Sigmoid colon (tissue), 7 donors: ENCODE measurements at regions of chr15 and their contacts with region 1.

Region 1: GRCh38 chr15:49468440-49468839 is 45.4 kb downstream of the FGF7 start:
- DNase-seq: no peak
- H3K4me3 ChIP-seq: no peak overlapping the region
- H3K27ac ChIP-seq: peak overlapping the region in 3 of 4 donors; percentile 60 to 72 (median 64)
- H3K4me1 ChIP-seq: peaks cover 0 to 61% (median 43%) of the 10 kb centered on the region in 4 donors
- H3K27me3 ChIP-seq: no peaks in the 10 kb centered on the region
- CTCF ChIP-seq: no peak
- EP300 ChIP-seq: no peak
- POLR2A ChIP-seq: no peak

Region 2: DNA sequence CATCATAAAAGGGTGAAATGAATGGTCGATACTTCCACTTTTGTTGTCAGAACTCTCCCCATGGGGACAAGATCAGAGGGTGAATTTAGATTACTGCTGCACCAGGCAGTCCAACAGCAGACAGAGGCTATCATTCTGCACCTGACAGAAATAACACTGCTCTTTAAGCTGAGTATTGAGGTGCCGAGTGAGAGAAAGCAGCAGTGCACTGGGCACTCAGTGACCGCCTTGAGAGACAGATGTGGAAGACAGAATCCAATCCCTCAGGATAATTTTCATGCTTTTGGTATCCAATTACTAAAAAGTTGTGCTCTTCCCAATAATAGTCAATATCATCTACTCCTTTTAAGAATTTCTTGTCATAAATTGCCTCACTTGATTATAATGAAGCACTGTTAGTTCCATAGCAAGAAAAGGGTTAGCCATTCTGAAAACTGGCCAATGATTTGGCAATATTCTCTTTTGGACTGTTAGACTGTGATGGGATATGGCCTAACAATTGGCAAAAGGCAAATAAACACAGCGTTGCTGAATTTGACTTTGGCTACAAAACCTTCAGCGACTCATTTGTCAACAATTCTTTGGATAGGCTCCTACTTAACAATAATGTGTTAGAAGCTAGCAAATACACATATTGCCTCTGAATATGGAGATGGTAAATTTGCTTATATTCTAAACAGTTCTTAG is 39.9 kb before region 1 on chr15:
- intact Hi-C with region 1: loop called (anchors 5 kb)
- DNase-seq: no peak
- H3K4me3 ChIP-seq: peak overlapping the region in 3 of 4 donors; percentile 49 to 57 (median 56)
- H3K27ac ChIP-seq: peak overlapping the region; percentile 64 to 79 (median 77)
- H3K4me1 ChIP-seq: peaks cover 0 to 44% (median 30%) of the 10 kb centered on the region in 4 donors
- H3K27me3 ChIP-seq: no peaks in the 10 kb centered on the region
- CTCF ChIP-seq: no peak
- EP300 ChIP-seq: no peak
- POLR2A ChIP-seq: no peak